Activated CD4-positive, alpha-beta T cell treated with anti-CD3 and anti-CD28 coated beads, Interleukin-2, amount 10 ng/mL, durations not matched to agents 24 days and 14 days (primary cell): ENCODE measurements at regions of chr9 and their contacts with region 1.

Region 1: DNA sequence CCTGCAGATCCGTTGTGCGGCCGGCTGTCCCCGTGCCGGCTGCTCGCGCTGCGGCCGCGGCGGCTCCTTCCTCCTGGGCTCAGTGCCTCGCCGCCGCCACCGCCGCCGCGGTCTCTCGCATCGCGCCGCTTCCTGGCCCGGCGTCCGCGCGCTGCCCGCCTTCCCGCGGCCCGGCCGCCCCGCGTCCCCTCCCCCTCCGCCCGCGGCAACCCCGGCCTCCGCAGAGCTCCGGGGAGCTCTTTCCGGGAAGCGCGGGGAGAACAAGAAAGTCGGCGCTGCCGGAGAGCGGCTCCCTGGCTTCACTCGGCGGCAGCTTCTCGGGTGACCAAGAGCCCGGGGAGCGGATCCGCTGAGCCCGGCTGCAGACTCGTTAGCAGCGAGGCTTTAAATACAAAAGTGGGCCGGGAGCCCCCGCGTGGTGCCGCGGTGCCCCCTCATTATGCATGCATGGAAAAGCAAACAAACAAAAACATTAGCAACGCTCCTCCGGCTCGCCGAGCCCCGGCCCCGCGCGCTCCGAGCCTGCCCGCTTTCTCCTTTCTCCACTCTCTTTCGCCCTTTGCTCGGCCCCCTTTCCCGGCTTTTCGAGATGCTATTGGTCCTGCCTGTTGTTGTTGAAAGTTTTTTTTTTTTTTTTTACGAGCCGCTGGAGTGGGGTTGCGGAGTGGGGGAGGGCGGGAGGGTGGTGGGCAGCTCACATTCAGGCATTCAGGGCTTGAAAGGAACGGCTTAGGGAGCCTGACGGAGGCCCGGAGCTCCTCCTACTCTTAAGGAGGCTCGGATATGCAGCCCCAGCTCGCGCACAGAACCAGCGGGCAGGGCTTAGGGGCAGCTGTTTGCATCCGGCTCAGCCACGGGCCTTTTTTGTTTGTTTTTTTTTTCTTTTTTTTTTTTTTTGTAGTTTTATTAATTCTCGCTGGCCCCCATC is at the start of gene GAS1:
- DNase-seq: peak; percentile 87
- H3K4me3 Mint-ChIP-seq: peak within 1 kb of the TSS; percentile 84
- H3K27ac Mint-ChIP-seq: no peak within 1 kb of the TSS
- H3K4me1 Mint-ChIP-seq: peaks cover 11% of the 10 kb centered on the region
- H3K27me3 Mint-ChIP-seq: peaks cover 33% of the 10 kb centered on the region
- total RNA-seq, gene GAS1: 0.14 TPM in 2 replicates

Region 2: GRCh38 chr9:86405926-86406325 is 541.5 kb before region 1 on chr9:
- intact Hi-C with region 1: loop called (anchors 2 kb)
- DNase-seq: no peak
- H3K4me3 Mint-ChIP-seq: peak overlapping the region; percentile 36
- H3K27ac Mint-ChIP-seq: peak overlapping the region; percentile 18
- H3K4me1 Mint-ChIP-seq: peaks cover 9% of the 10 kb centered on the region
- H3K27me3 Mint-ChIP-seq: peaks cover 7% of the 10 kb centered on the region

Region 3: DNA sequence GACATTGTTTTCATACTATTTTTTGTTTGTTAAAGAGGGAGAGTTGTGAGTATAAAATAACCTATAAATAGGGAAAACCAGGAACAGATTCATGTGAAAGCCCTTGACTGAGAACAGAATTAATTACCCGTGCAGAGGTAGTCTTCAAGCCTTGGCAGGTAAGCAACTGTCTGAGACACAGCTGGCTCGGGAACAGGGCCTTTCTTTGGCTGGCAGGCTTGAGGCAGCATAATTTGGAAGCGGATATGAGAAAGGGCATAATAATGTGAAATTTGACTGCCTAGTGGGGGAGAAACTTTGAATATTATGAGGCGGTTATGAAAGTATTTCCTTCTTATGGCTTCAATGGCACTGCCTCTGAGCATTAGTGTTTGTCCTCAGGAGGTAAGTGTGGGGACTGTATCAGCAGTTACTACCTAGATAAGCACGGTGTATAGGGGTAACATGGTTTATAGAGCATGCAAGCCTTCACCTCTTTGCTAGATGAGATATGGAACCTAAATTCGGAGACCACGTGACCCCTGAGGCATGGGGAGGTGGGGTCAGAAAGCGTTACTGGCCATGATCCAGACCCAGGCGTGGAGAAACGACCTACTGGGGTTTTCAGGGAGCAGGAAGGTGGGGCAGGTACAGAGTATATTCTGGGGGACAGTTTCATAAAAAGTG is 210.1 kb after region 1 on chr9:
- intact Hi-C with region 1: no loop called
- DNase-seq: no peak
- H3K4me3 Mint-ChIP-seq: no peak overlapping the region
- H3K27ac Mint-ChIP-seq: no peak overlapping the region
- H3K4me1 Mint-ChIP-seq: no peaks in the 10 kb centered on the region
- H3K27me3 Mint-ChIP-seq: no peaks in the 10 kb centered on the region